Right lobe of liver (tissue), 6 donors: ENCODE measurements at regions of chr1 and their contacts with region 1.

Region 1: DNA sequence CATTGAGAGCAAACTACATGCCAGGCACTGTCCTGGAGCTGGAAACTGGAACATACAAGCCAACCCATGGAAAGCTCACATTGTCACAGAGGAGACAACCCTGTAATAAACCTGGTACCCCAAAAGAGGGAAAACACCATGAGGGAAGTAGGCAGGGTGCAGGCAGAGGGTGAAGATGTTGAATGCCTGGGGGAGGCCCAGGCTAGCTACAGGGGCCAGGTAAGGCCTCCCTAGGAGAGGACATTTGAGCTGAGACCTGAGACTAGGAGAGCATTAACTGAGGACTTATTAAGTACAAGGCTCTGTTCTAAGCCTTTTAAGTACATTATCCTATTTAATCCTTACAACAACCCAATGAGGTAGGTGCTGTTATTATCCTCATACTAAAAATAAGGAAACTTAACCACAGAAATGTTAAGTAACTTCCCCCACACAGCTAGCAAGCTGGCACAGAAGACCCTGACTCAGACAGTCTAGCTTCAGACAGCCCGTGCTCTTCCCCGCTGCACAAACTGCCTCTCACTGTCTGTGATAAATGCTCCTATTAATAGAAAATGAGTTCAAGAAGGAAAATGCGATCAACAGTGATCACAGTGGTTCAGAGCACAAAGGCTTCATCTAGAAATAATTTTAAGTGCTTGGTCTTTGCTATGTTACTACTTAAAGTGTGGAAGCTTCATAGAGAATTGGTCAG is 41.8 kb downstream of the ZNF281 start:
- DNase-seq: no peak
- ATAC-seq: peak in 1 of 4 donors; percentile 3
- H3K4me3 ChIP-seq: no peak overlapping the region
- H3K27ac ChIP-seq: peak overlapping the region in 1 of 3 donors; percentile 25
- H3K4me1 ChIP-seq: peaks cover 0 to 79% (median 15%) of the 10 kb centered on the region in 4 donors
- H3K27me3 ChIP-seq: no peaks in the 10 kb centered on the region
- CTCF ChIP-seq: no peak
- POLR2A ChIP-seq: no peak

Region 2: DNA sequence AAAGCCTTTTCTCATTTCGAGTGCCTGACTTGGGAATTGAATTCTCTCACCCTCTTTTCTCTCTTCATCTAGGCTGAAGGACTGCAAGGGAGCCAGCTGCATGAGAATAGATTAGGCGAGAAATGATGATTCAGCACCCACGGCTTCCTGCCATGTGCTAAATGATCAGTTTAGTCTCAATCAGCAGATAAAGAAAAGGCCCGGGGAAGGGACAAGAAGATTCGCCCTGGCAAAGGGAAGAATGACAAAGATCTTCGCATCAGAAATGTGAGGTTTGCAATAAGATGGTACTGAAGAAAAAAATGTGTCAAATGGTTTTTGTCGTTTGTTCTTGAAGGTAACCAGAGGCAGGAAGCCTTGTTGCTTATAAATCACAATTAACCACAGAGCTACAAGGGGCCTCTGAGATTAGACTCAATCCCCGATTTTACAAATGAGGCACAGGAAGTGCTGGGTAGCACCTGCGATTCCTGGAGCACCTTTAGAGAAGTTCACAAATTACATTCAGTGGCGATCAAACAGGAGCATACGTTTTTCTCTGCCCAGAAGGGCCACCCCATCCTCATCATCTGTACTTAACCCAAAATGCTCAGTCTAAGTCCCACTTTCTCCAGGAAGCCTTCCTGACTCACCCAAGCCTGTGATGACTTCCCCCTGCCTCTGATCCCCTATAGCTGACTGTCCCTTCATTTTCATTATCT is 141.6 kb before region 1 on chr1:
- intact Hi-C with region 1: no loop called
- DNase-seq: no peak
- ATAC-seq: peak in 1 of 4 donors; percentile 14
- H3K4me3 ChIP-seq: no peak overlapping the region
- H3K27ac ChIP-seq: peak overlapping the region in 1 of 3 donors; percentile 2
- H3K4me1 ChIP-seq: peaks cover 0 to 18% (median 5%) of the 10 kb centered on the region in 4 donors
- H3K27me3 ChIP-seq: no peaks in the 10 kb centered on the region
- CTCF ChIP-seq: no peak
- POLR2A ChIP-seq: no peak

Region 3: DNA sequence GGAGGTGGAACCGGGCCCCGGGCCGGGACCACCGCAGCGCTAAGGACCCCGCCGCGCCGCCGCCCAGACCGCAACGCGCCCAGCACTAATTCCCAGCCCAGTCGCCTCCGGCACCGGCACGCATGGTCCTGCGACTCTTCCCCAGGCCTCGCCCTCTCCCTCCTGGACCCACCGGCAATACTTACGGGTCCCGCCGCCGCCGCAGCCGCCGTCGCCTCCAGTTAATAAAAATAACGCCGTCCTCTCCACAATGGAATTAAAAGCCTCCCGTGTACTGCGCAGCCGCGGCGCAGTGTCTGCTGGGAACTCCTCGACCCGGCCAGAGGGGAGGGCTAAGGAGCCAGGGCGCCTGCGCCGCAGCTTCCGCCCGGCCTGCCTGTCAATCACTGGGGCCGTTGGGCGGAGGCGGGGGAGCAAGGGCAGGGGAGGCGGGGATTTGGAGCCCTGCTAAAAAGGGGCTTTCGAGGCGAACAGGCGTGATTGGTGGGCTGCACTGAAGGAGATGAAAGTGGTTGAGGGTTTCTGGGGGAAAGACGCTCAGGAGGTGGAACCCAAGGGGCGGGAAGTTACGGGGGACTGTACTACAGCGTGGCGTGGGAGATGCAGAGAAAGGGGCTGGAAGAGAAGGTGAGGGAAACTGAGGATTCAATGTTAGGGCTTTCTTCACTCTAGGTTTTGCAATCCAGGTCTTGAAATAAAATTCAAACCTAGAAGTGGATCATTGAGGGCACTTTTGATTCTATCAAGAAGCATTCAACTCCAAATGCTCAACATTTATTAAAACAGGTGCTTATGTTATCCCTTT is 42.0 kb after region 1 on chr1 and contains the start of gene ZNF281:
- intact Hi-C with region 1: loop called in 1 of 2 experiments (anchors 10 kb)
- DNase-seq: peak; percentile 96 to 97 (median 96)
- ATAC-seq: peak; percentile 85 to 94 (median 90)
- H3K4me3 ChIP-seq: peak within 1 kb of the TSS; percentile 84 to 90 (median 85)
- H3K27ac ChIP-seq: peak within 1 kb of the TSS; percentile 92 to 94 (median 93)
- H3K4me1 ChIP-seq: peaks cover 0 to 50% (median 14%) of the 10 kb centered on the region in 4 donors
- H3K27me3 ChIP-seq: no peaks in the 10 kb centered on the region
- CTCF ChIP-seq: no peak
- POLR2A ChIP-seq: peak; percentile 88
- total RNA-seq, gene ZNF281: 12.6 to 15.2 (median 13.8) TPM